ENCODE measurements at regions of chr10 and their contacts with region 1.

Region 1: DNA sequence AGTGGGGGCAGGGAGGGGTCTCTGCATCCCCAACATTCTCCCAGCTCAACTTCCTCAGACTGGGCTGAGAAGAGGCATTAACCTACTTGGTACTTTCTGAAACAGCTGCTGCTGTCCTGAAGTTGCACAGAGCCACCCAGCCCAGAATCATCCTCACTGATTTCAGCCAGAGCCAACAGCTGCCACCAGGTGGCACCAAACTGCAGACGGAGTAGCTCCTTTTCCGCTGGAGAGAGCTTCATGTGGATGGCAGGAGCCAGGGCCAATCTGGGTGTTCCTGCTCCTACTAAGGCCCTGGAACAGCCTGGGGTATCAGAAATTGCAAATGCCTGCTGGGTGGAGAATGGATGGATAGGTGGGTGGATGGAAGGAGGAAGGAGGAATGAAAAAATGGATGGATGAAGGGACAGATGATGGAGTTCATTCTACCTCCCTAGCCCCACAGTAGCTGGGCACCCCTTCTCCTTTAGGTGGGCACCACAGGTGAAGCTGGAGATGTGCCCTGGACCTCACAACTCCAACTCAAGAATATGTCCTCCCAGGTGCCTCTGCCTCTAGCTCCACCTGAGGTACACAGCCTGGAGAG is 11.8 kb upstream of the DRGX start:
- DNase-seq: peak; percentile 62
- H3K4me3 ChIP-seq: no peak overlapping the region
- H3K27ac ChIP-seq: no peak overlapping the region
- H3K4me1 ChIP-seq: no peaks in the 10 kb centered on the region
- H3K27me3 ChIP-seq: peaks cover 2 to 10% of the 10 kb centered on the region in 2 experiments
- CTCF ChIP-seq: peak; percentile 90 to 91
- POLR2A ChIP-seq: no peak

Region 2: DNA sequence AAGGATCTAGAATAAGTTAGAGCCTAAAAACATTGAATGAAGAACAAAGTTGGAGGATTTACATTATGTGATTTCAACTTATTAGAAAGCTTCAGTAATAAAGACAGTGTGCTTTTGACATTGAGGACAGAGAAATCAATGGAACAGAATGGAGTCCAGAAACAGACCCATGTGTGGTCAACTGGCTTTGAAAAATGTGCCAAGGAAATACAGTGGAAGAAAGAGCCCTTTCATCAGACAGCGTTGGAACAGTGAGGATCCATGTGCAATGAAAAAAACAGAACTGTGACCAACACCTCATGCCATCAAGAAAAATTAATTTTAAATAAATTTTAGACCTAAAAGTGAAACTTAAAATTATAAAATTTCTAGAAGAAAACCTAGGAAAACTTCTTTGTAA is 417.4 kb before region 1 on chr10:
- CTCF ChIA-PET with region 1: no interaction called
- POLR2A ChIA-PET with region 1: no interaction called
- dilution Hi-C with region 1: no loop called
- intact Hi-C with region 1: no loop called
- DNase-seq: no peak
- H3K4me3 ChIP-seq: no peak overlapping the region
- H3K27ac ChIP-seq: no peak overlapping the region
- H3K4me1 ChIP-seq: no peaks in the 10 kb centered on the region
- H3K27me3 ChIP-seq: peaks cover 0 to 4% of the 10 kb centered on the region in 2 experiments
- CTCF ChIP-seq: no peak
- POLR2A ChIP-seq: no peak

Region 3: DNA sequence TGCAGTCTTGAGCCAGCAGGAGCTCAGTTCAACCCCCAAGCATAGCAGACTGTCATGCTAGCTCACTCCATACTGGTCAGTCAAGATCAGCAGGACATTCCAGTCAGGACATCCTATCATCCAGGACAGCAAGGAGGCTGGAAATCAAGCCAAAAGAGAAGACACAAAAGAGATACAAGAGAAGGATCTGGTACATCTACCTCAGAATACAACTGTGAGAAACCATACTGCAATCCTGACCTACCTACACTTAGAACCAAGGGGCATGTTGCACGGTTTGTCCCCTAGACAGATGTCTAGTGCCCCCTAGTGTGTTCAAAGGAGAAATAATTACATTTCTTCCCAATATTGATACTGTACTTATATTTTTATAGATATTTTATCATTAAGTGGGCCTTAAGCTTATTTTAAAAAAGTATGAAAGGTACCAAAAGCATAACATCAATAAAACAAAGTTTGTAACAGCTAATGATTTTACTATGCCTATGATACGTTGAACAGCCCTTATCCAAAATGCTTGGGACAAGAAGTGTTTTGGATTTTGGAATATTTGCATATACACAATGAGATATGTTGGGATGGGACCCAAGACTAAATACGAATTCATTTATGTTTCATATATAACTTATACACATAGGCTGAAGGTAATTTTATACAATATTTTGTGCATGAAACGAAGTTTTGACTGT is 104.6 kb after region 1 on chr10:
- CTCF ChIA-PET with region 1: interaction called, 109 read pairs
- POLR2A ChIA-PET with region 1: no interaction called
- dilution Hi-C with region 1: no loop called
- intact Hi-C with region 1: loop called (anchors 1 kb)
- DNase-seq: peak; percentile 26
- H3K4me3 ChIP-seq: no peak overlapping the region
- H3K27ac ChIP-seq: no peak overlapping the region
- H3K4me1 ChIP-seq: peaks cover 2% of the 10 kb centered on the region
- H3K27me3 ChIP-seq: no peaks in the 10 kb centered on the region
- CTCF ChIP-seq: peak; percentile 40 to 49
- POLR2A ChIP-seq: no peak

Region 4: GRCh38 chr10:49619613-49620012 is 212.0 kb after region 1 on chr10:
- CTCF ChIA-PET with region 1: no interaction called
- POLR2A ChIA-PET with region 1: no interaction called
- dilution Hi-C with region 1: no loop called
- intact Hi-C with region 1: no loop called
- DNase-seq: no peak
- H3K4me3 ChIP-seq: no peak overlapping the region
- H3K27ac ChIP-seq: no peak overlapping the region
- H3K4me1 ChIP-seq: no peaks in the 10 kb centered on the region
- H3K27me3 ChIP-seq: peaks cover 19 to 20% of the 10 kb centered on the region in 2 experiments
- CTCF ChIP-seq: no peak
- POLR2A ChIP-seq: no peak

Region 5: GRCh38 chr10:50224330-50224952 is 816.8 kb after region 1 on chr10:
- CTCF ChIA-PET with region 1: interaction called, 7 read pairs
- POLR2A ChIA-PET with region 1: no interaction called
- dilution Hi-C with region 1: no loop called
- intact Hi-C with region 1: loop called (anchors 5 kb)
- DNase-seq: peak; percentile 55
- H3K4me3 ChIP-seq: no peak overlapping the region
- H3K27ac ChIP-seq: no peak overlapping the region
- H3K4me1 ChIP-seq: no peaks in the 10 kb centered on the region
- H3K27me3 ChIP-seq: peaks cover 2 to 23% of the 10 kb centered on the region in 2 experiments
- CTCF ChIP-seq: peak; percentile 37 to 52
- POLR2A ChIP-seq: no peak

Measured in endothelial cell of umbilical vein (primary cell).